OCI-LY7 (cell line): ENCODE measurements at regions of chr11 and their contacts with region 1.

Region 1: DNA sequence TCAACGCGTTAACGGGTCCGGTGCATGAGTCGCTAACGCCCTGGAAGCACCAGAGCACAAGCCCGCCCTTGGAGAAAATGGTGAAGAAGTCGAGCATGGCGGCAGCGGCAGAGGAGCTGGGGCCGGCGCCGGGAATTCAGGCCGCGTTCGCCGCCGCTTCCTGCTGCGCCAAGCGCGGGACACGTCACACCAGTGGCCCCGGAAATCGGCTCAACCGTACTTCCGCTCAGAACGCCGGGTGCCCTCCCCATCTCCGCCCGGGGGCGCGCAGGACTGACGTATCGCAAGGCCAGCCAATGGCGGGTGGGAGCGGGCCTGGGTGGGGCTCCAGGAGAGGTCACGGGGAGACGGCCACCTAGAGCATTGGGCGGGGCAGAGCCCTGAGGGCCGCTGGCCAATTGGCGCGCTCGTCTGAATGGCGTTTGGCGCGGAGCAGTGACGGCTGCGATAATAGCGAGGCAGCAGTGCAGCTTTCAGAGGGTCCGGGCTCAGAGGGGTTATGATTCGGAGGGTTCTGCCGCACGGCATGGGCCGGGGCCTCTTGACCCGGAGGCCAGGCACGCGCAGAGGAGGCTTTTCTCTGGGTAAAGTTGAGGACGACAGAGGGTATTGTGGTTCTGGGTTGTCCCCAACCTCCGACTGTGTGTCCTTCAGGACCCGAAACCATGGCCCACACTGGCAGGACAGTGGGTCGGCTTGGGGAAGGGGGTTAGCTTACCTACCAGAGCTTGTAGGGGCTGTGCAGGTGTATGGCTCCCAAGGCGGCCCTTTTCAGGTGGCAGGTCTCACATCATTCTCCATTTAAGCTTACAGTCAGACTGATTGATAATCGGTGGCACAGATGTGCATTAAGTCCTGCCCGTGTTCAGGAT is at the starts of genes FOXRED1 and SRPRA:
- DNase-seq: peak; percentile 99
- H3K4me3 ChIP-seq: peak within 1 kb of the TSS; percentile 98
- H3K27ac ChIP-seq: peak within 1 kb of the TSS; percentile 52
- H3K4me1 ChIP-seq: peaks cover 19% of the 10 kb centered on the region
- CTCF ChIP-seq: no peak
- total RNA-seq, gene FOXRED1: 30.4 and 42.5 TPM in 2 replicates
- total RNA-seq, gene SRPRA: 56.5 and 62.9 TPM in 2 replicates

Region 2: GRCh38 chr11:125618383-125618782 is 650.6 kb before region 1 on chr11:
- CTCF ChIA-PET with region 1: no interaction called
- POLR2A ChIA-PET with region 1: no interaction called
- intact Hi-C with region 1: loop called (anchors 10 kb)
- DNase-seq: no peak
- H3K4me3 ChIP-seq: no peak overlapping the region
- H3K27ac ChIP-seq: no peak overlapping the region
- H3K4me1 ChIP-seq: no peaks in the 10 kb centered on the region
- CTCF ChIP-seq: no peak

Region 3: GRCh38 chr11:126211235-126212088 is 57.5 kb before region 1 on chr11 and contains the starts of genes FAM118B and RPUSD4:
- CTCF ChIA-PET with region 1: no interaction called
- POLR2A ChIA-PET with region 1: interaction called, 3 read pairs
- intact Hi-C with region 1: loop called (anchors 5 kb)
- DNase-seq: peak; percentile 97
- H3K4me3 ChIP-seq: peak within 1 kb of the TSS; percentile 81
- H3K27ac ChIP-seq: peak within 1 kb of the TSS; percentile 17
- H3K4me1 ChIP-seq: peaks cover 22% of the 10 kb centered on the region
- CTCF ChIP-seq: no peak
- total RNA-seq, gene FAM118B: 9.9 and 11.5 TPM in 2 replicates
- total RNA-seq, gene RPUSD4: 29.1 and 39.2 TPM in 2 replicates

Region 4: GRCh38 chr11:126282736-126283591 is 14.0 kb after region 1 on chr11 and contains the start of gene TIRAP:
- CTCF ChIA-PET with region 1: no interaction called
- POLR2A ChIA-PET with region 1: interaction called, 7 read pairs
- intact Hi-C with region 1: loop called (anchors 1 kb)
- DNase-seq: peak; percentile 72
- H3K4me3 ChIP-seq: peak within 1 kb of the TSS; percentile 72
- H3K27ac ChIP-seq: peak within 1 kb of the TSS; percentile 47
- H3K4me1 ChIP-seq: peaks cover 34% of the 10 kb centered on the region
- CTCF ChIP-seq: no peak
- total RNA-seq, gene TIRAP: 3.4 TPM in 2 replicates